H1 (cell line): ENCODE measurements at regions of chr17 and their contacts with region 1.

Region 1: DNA sequence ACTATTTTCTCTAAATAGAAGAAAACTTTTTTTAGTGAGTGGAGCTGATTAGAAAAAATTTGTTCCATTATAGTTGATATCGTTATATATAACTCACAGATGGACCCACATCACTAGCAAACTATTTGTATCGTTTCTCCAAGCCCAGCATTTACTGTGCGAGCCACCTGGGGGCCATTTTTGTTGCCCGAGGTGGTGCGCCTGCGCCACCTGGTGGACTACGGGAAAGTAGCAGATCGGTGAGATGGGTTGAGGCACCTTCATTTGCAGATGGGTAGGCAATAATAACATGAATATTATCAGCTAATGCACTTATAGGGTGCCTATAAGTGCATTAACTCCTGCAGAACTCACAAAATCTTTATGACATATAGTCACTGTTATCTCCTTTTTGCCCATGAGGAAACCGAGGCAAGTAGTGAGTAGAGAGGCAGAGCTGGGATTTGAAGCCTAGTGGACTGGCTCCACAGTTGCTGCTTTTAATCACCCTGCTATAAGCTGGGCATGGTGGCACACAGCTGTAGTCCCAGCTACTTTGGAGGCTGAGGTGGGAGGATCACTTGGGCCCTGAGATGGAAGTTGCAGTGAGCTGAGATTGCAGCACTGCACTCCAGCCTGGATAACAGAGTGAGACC is 23.2 kb upstream of the NTN1 start:
- DNase-seq: peak in 1 of 2 experiments; percentile 85
- H3K4me3 ChIP-seq: no peak overlapping the region
- H3K27ac ChIP-seq: no peak overlapping the region
- H3K4me1 ChIP-seq: peaks cover 6 to 15% (median 12%) of the 10 kb centered on the region in 4 experiments; a peak in 5 of 7 replicates
- H3K27me3 ChIP-seq: peaks cover 17 to 23% (median 18%) of the 10 kb centered on the region in 4 experiments
- CTCF ChIP-seq: peak; percentile 95 to 99 (median 96)
- EP300 ChIP-seq: no peak
- POLR2A ChIP-seq: no peak
- RAD21 ChIP-seq: peak; percentile 84 to 87

Region 2: GRCh38 chr17:8894673-8895578 is 103.2 kb before region 1 on chr17:
- CTCF ChIA-PET with region 1: interaction called, 34 read pairs
- POLR2A ChIA-PET with region 1: no interaction called
- DNase-seq: peak in 1 of 2 experiments; percentile 74
- H3K4me3 ChIP-seq: peak overlapping the region in 2 of 4 experiments; percentile 21 to 54; a peak in 3 of 8 replicates
- H3K27ac ChIP-seq: no peak overlapping the region
- H3K4me1 ChIP-seq: peaks cover 0 to 11% (median 8%) of the 10 kb centered on the region in 4 experiments; a peak in 4 of 7 replicates
- H3K27me3 ChIP-seq: no peaks in the 10 kb centered on the region; a peak in 1 of 7 replicates
- CTCF ChIP-seq: peak; percentile 58 to 79 (median 76)
- EP300 ChIP-seq: no peak
- POLR2A ChIP-seq: no peak
- RAD21 ChIP-seq: peak; percentile 83 to 85

Region 3: DNA sequence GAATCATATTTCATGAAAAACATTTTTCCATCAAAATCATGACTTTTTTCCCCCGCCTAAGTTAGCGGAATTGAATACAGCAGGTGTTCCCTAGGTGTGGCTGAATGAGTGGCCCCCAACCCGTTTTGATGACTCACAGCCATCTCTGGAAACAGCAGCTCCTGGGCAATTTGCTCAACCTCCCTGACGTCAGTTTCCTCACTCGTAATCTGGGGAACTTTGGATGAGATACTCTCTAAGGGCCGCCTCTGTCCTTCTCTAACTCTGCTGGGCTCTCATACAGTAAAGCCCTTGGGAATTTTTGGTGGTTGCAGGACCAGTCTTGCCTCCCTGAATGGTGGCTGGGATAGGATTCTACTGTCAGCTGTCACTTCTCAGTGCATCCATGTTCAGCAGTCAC is 11.6 kb after region 1 on chr17:
- CTCF ChIA-PET with region 1: interaction called, 13 read pairs
- POLR2A ChIA-PET with region 1: interaction called, 4 read pairs
- DNase-seq: no peak
- H3K4me3 ChIP-seq: no peak overlapping the region
- H3K27ac ChIP-seq: no peak overlapping the region
- H3K4me1 ChIP-seq: peaks cover 2 to 6% (median 4%) of the 10 kb centered on the region in 4 experiments; a peak in 5 of 7 replicates
- H3K27me3 ChIP-seq: peaks cover 23 to 51% (median 46%) of the 10 kb centered on the region in 4 experiments
- CTCF ChIP-seq: no peak
- EP300 ChIP-seq: no peak
- POLR2A ChIP-seq: no peak
- RAD21 ChIP-seq: no peak

Region 4: DNA sequence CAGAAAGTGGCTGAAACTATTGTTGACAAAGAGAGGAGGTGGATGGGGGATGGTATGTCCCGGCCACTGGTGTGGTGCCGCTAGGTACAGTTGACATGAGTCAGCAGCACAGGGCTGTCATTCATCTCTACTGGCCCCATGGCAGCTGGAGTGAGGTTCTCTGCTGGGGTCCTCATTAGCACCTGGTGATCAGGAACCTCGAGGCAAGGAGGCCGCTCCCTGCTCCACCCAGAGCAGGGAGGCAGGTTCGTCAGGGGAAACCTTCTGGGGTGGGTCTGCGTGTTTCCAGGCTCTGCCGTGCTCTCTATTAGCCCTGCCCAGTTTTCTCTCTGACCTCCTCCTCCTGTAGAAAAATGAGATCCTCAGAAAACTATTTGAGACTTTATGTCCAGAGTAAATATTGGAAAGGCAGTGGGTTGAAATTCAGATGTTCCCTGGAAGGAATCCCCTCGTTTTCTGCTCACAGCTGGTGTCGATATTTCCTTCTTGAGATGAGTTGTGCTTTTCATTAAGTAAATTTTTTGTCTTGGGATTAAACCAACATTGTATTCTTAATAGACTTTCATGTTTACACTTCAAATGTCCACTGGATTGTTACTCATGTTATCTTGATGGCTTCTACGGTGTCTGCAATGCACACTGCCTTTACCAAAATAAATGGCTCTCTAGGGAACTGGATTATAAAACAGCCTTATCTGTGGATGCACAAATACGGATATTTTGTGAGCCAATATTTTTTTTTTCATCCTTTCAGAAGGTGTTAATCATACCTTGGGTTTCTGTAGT is 30.3 kb after region 1 on chr17:
- CTCF ChIA-PET with region 1: interaction called, 11 read pairs
- POLR2A ChIA-PET with region 1: no interaction called
- DNase-seq: no peak
- H3K4me3 ChIP-seq: no peak overlapping the region
- H3K27ac ChIP-seq: no peak overlapping the region
- H3K4me1 ChIP-seq: peaks cover 6 to 17% (median 11%) of the 10 kb centered on the region in 4 experiments; a peak in 6 of 7 replicates
- H3K27me3 ChIP-seq: peaks cover 12 to 31% (median 24%) of the 10 kb centered on the region in 4 experiments
- CTCF ChIP-seq: no peak
- EP300 ChIP-seq: no peak
- POLR2A ChIP-seq: no peak
- RAD21 ChIP-seq: no peak

Region 5: DNA sequence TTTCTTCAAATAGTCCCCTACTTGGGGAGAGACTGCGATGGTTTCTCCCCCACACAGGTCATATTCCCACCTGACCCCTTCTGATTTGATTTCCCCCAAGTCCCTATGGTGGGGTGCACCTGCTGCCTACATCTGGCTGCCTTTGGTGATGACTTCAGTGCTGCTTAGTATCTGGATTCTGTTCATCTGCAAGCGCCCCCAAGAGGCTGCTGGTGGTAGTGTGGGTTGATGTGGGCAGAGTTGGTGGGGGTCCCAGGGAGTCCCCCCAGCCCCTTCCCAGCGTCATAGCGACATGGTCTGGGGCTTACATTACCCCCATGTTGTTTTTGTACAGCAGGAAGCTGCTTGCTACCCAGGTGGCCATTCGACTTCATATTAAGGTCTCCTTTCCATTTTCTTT is 122.4 kb after region 1 on chr17:
- CTCF ChIA-PET with region 1: interaction called, 11 read pairs
- POLR2A ChIA-PET with region 1: no interaction called
- DNase-seq: peak in 1 of 2 experiments; percentile 65
- H3K4me3 ChIP-seq: no peak overlapping the region
- H3K27ac ChIP-seq: no peak overlapping the region
- H3K4me1 ChIP-seq: peaks cover 8 to 20% (median 11%) of the 10 kb centered on the region in 4 experiments
- H3K27me3 ChIP-seq: peaks cover 0 to 2% (median 0%) of the 10 kb centered on the region in 4 experiments; a peak in 3 of 7 replicates
- CTCF ChIP-seq: peak; percentile 50 to 59 (median 56); a peak in 3 of 4 replicates
- EP300 ChIP-seq: no peak
- POLR2A ChIP-seq: no peak
- RAD21 ChIP-seq: peak; percentile 34 to 62; a peak in 3 of 4 replicates

Region 6: DNA sequence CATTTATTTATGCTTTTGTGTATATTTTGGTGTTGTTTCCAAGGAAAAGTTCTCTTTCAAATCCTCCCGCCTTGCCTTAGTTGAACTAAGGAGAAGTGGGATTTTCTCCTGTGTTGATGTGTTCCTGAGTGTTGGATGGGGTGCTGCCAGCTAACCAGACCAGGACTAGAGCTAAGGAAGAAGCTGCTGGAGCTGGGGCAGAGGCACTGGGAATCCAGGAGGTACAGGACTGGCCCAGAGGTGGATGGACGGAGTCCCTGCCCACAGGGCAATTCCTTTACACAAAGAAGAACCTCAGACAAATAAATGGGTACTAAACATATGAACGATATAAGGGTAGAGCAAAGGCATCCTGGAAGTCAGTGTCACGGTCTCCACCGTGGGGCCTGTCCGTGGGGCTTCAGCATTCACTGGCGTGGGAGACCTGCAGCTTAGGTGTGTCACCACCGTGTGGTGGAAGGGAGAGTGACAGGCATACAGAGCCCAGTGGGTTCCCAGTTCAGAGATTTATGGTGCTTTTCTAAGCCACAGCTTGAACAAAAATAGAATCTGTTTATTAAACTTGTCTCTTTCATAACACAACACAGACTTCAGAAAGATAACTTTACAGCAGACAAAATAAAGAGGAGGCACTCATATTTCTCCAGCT is 293.9 kb after region 1 on chr17:
- CTCF ChIA-PET with region 1: interaction called, 10 read pairs
- POLR2A ChIA-PET with region 1: no interaction called
- DNase-seq: peak in 1 of 2 experiments; percentile 66
- H3K4me3 ChIP-seq: no peak overlapping the region
- H3K27ac ChIP-seq: no peak overlapping the region
- H3K4me1 ChIP-seq: peaks cover 0 to 4% (median under 1%) of the 10 kb centered on the region in 4 experiments; a peak in 2 of 7 replicates
- H3K27me3 ChIP-seq: no peaks in the 10 kb centered on the region
- CTCF ChIP-seq: peak; percentile 65 to 84 (median 75)
- EP300 ChIP-seq: no peak
- POLR2A ChIP-seq: no peak
- RAD21 ChIP-seq: peak; percentile 77 to 83